ENCODE measurements at regions of chr10 and their contacts with region 1.

Region 1: DNA sequence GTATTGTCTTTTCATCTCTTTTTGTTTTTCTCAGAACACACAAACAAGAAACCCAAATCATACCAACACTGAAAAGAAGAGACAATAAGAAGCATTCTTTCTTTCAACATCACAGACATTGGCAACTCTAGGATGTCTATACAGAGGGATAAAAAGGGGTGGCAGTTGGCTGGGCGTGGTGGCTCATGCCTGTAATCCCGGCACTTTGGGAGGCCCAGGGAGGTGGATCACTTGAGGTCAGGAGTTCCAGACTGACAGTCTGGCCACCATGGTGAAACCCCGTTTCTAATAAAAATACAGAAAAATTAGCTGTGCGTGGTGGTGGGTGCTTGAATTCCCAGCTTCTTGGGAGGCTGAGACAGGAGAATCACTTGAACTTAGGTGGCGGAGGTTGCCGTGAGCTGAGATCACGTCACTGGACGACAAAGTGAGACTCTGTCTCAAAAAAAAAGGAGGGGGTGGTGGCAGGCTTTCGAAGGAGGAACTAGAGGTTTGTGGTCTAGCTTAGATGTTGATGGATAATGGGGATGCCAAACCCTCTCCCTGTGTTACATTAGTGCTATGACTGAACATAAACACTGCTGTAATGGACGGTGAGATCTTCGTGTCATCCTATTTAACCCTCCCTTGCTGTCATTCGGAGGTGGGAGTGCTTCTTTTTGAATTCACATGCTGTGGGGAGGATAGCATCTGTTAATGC is 9.4 kb downstream of the CNNM2 start:
- DNase-seq: no peak
- ATAC-seq: no peak
- H3K4me3 ChIP-seq: no peak overlapping the region
- H3K27ac ChIP-seq: no peak overlapping the region
- H3K4me1 ChIP-seq: no peaks in the 10 kb centered on the region
- H3K27me3 ChIP-seq: no peaks in the 10 kb centered on the region
- CTCF ChIP-seq: no peak

Region 2: GRCh38 chr10:102988404-102989314 is 61.2 kb after region 1 on chr10:
- CTCF ChIA-PET with region 1: no interaction called
- POLR2A ChIA-PET with region 1: no interaction called
- intact Hi-C with region 1: loop called (anchors 10 kb)
- DNase-seq: peak; percentile 85
- ATAC-seq: peak; percentile 98
- H3K4me3 ChIP-seq: peak overlapping the region; percentile 34; the same call in 1 of the 2 replicates
- H3K27ac ChIP-seq: peak overlapping the region; percentile 49
- H3K4me1 ChIP-seq: peaks cover 10% of the 10 kb centered on the region
- H3K27me3 ChIP-seq: no peaks in the 10 kb centered on the region
- CTCF ChIP-seq: no peak